Calu3 (cell line): ENCODE measurements at regions of chr14 and their contacts with region 1.

Region 1: GRCh38 chr14:24411443-24412389 is 12.9 kb downstream of the NYNRIN start:
- DNase-seq: peak; percentile 52
- H3K4me3 Mint-ChIP-seq: no peak overlapping the region
- H3K27ac Mint-ChIP-seq: no peak overlapping the region
- H3K4me1 Mint-ChIP-seq: no peaks in the 10 kb centered on the region
- H3K27me3 Mint-ChIP-seq: no peaks in the 10 kb centered on the region
- CTCF ChIP-seq: peak; percentile 45

Region 2: GRCh38 chr14:24361326-24361725 is 50.4 kb before region 1 on chr14:
- CTCF ChIA-PET with region 1: interaction called, 12 read pairs
- intact Hi-C with region 1: loop called (anchors 1 kb)
- DNase-seq: no peak
- H3K4me3 Mint-ChIP-seq: no peak overlapping the region
- H3K27ac Mint-ChIP-seq: no peak overlapping the region
- H3K4me1 Mint-ChIP-seq: peaks cover 11% of the 10 kb centered on the region
- H3K27me3 Mint-ChIP-seq: no peaks in the 10 kb centered on the region
- CTCF ChIP-seq: no peak